ENCODE measurements at regions of chr17 and their contacts with region 1.

Region 1: DNA sequence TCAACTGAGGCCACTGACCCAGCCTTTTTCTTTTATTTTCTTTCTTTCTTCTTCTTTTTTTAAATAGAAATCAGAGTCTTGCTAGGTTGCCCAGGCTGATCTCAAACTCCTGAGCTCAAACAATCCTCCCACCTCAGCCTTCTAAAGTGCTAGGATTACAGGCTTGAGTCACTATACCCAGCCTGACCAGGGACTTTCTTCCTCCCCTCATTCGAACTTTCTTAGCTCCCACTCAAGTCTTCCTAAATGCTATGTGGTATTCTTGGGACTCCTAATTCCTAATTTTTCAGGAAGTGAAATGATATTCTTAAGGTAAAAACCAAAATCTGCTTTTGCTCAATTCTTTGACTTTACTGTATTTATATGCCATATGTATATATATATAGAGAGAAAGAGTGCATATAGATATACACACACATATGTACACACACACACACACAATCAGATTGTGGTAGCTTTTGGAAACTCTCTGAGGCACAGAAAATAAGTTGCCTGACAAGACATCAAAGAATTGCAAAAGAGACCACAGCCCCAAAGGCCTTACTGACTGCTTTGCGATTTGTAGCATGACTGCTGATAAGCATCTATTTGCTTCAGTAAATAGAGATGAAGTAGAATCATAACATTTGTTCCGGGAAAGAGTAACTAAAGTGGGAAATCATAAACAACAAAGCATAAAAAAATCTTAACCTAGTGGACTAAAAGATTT is 9.5 kb upstream of the AMZ2 start:
- DNase-seq: no peak
- CTCF ChIP-seq: no peak

Region 2: DNA sequence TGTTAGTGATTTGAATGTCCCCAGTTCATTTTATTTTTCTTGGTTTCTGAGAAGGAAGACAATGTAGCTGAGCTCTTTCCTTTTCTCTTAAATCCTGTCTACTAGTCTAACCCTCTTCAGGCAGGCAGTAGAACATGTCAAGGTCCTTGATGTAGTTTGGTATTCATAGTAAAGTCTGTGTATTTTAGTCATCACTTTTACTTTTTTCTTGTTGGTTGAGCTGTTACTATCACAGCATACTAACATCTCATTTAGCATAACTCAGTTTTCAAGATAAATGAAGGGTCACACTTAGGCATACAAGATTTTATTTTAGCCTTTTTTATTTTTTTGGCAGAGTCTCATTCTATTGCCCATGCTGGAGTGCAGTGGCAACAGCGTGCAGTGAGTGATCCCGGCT is 132.2 kb before region 1 on chr17:
- CTCF ChIA-PET with region 1: no interaction called
- POLR2A ChIA-PET with region 1: interaction called, 10 read pairs
- DNase-seq: no peak
- CTCF ChIP-seq: no peak

Region 3: GRCh38 chr17:68356520-68356919 is 118.2 kb after region 1 on chr17:
- CTCF ChIA-PET with region 1: no interaction called
- POLR2A ChIA-PET with region 1: no interaction called
- DNase-seq: peak; percentile 50
- CTCF ChIP-seq: no peak

Region 4: GRCh38 chr17:68377862-68378770 is 139.8 kb after region 1 on chr17:
- CTCF ChIA-PET with region 1: no interaction called
- POLR2A ChIA-PET with region 1: no interaction called
- DNase-seq: no peak
- CTCF ChIP-seq: no peak

Region 5: DNA sequence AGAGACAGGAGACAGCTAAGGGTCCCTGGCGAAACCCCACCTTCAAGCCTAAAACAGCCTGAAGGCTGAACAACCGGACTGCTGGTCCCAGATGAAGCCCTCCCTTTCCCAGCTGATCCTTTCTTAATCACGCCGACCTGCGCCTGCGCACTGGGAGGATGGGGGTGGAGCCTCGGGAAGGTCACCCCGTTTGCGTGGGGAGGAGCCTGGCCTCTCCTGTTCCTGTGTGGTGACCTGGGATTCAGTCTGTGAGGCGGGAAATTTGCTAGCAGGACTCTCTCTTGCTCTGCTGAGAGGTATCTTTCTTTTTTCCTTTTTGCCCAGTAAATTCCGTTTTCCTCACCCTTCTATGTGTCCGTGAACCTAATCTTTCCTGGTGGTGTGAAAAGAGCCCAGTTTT is 353.3 kb after region 1 on chr17:
- CTCF ChIA-PET with region 1: no interaction called
- POLR2A ChIA-PET with region 1: no interaction called
- DNase-seq: no peak
- CTCF ChIP-seq: no peak

Measured in GM10248 (cell line).